Activated CD8-positive, alpha-beta T cell treated with anti-CD3 and anti-CD28 coated beads, Interleukin-2, amount 10 ng/mL, durations not matched to agents 7 days and 5 days (primary cell): ENCODE measurements at regions of chr10 and their contacts with region 1.

Region 1: GRCh38 chr10:84264611-84265141 is 19.8 kb downstream of the RGR start:
- DNase-seq: peak; percentile 82
- ATAC-seq: peak; percentile 97
- H3K4me3 Mint-ChIP-seq: no peak overlapping the region
- H3K27ac Mint-ChIP-seq: no peak overlapping the region
- H3K4me1 Mint-ChIP-seq: peaks cover 18% of the 10 kb centered on the region
- H3K27me3 Mint-ChIP-seq: peaks cover 18% of the 10 kb centered on the region

Region 2: DNA sequence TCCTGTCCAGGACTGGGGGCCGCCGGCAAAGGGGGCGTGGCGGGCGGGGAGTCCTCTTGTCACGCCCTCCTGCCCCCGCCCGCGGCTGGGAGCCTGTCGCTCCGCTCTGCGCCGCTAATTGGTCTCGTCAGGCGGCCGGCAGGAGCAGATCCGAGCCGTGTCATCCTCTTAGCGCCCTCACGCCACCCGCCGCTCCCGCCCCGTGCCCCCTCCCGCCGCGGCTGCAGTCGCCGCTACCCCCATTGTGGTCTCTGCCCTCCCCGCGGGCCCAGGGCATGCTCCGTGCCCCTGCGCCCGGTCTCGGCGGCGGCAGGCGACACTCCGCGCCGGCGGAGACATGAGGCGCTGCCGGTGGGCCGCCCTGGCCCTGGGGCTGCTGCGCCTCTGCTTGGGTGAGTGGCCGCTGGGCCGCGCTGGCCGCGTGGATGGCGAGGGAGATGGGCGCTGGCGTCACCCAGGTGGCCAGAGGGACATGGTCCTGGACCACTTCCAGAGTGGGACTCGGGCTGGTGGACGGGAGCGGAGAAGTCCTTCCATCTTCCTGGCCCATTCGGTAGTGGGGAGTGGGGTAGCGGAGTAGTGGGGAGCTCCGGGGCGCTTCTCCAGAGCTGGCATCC is 70.1 kb before region 1 on chr10 and contains the start of gene CDHR1:
- CTCF ChIA-PET with region 1: no interaction called
- POLR2A ChIA-PET with region 1: no interaction called
- DNase-seq: peak; percentile 65
- ATAC-seq: peak; percentile 84
- H3K4me3 Mint-ChIP-seq: peak within 1 kb of the TSS; percentile 50
- H3K27ac Mint-ChIP-seq: no peak within 1 kb of the TSS
- H3K4me1 Mint-ChIP-seq: peaks cover 23% of the 10 kb centered on the region
- H3K27me3 Mint-ChIP-seq: peaks cover 52% of the 10 kb centered on the region
- total RNA-seq, gene CDHR1: 0.26 to 0.29 TPM

Region 3: DNA sequence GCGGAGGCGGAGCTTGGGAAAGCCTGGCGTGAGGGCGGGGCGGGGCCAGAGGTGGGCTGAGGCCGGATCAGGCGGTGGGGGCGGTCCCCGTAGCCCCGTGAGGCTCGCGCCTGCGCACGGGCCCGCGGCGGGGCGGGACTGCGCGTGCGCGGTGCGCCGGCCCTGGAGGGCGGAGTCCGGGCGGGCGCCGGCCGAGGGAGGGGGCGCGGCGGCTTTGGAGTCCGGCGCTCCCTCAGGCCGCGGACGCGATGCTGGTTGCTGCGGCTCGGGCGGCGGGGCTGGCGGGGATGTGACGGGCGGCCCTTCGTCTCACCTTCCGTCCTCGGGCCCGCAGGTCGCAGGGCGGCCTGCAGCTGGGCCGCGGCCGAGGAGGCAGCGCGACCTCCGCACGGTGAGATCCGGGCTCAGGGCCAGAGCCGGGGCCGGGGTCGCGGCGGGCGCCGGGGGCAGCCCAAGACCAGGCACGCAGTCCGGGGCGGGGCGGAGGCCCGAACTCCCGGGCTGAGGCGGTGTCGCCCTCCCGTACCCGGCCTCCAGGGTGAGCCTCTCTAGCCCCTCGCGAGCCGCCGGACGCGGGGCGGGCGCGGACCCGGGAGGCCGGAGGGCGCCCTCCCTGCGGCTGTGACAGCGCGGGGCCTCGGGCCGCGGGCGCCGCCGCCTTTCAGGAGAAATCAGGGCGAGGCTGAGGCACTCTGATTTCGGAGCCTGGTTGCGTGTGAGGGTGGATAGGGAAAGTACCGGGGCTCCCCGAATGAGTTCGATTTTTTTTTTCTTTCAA is 63.9 kb after region 1 on chr10 and contains the start of gene CCSER2:
- CTCF ChIA-PET with region 1: interaction called, 28 read pairs
- POLR2A ChIA-PET with region 1: interaction called, 5 read pairs
- DNase-seq: peak; percentile 94
- ATAC-seq: peak; percentile 80
- H3K4me3 Mint-ChIP-seq: peak within 1 kb of the TSS; percentile 82
- H3K27ac Mint-ChIP-seq: peak within 1 kb of the TSS; percentile 92
- H3K4me1 Mint-ChIP-seq: peaks cover 34% of the 10 kb centered on the region
- H3K27me3 Mint-ChIP-seq: peaks cover 3% of the 10 kb centered on the region
- total RNA-seq, gene CCSER2: 77.8 to 78.8 TPM

Region 4: GRCh38 chr10:84341538-84341856 is 76.8 kb after region 1 on chr10:
- CTCF ChIA-PET with region 1: interaction called, 17 read pairs
- POLR2A ChIA-PET with region 1: no interaction called
- DNase-seq: no peak
- ATAC-seq: peak; percentile 20
- H3K4me3 Mint-ChIP-seq: no peak overlapping the region
- H3K27ac Mint-ChIP-seq: peak overlapping the region; percentile 9
- H3K4me1 Mint-ChIP-seq: peaks cover 58% of the 10 kb centered on the region
- H3K27me3 Mint-ChIP-seq: no peaks in the 10 kb centered on the region

Region 5: DNA sequence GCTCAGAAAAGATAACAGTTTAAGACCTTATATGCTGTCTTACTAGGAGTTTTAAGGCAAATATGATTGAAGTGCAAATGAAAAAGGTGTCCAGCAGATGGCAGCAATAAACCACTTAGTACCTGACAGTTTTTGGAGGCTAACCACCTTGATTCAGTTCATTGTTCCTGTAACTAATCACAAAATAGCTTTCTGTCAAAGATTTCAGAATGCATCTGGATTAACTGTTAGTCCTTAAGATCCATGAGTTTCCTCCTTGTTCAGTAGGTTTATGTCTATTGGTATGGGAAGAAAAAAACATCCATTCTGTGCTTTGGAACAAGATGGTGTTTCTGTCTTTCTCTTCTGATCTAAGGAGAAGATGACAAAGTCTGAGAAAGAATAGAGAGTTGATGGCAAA is 110.3 kb after region 1 on chr10:
- CTCF ChIA-PET with region 1: interaction called, 24 read pairs
- POLR2A ChIA-PET with region 1: no interaction called
- DNase-seq: peak; percentile 65
- ATAC-seq: no peak
- H3K4me3 Mint-ChIP-seq: no peak overlapping the region
- H3K27ac Mint-ChIP-seq: no peak overlapping the region
- H3K4me1 Mint-ChIP-seq: peaks cover 22% of the 10 kb centered on the region
- H3K27me3 Mint-ChIP-seq: no peaks in the 10 kb centered on the region

Region 6: DNA sequence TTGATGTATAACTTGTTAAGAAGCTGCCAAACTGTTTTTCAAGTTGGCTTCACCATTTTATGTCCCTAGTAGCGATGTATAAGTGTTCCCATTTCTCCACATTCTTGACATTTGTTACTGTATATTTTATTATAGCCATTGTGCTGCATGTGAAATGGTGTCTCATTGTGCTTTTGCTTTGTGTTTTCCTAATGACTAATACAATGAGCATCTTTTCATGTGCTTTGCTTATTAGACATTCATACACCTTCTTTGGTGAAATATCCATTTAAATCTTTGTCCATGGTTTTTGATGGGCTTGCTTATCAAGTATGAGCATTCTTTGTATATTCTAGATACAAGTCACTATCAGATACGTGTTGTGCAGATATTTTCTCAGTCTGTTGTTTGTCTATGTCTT is 266.7 kb after region 1 on chr10:
- CTCF ChIA-PET with region 1: interaction called, 260 read pairs
- POLR2A ChIA-PET with region 1: no interaction called
- DNase-seq: no peak
- ATAC-seq: no peak
- H3K4me3 Mint-ChIP-seq: no peak overlapping the region
- H3K27ac Mint-ChIP-seq: no peak overlapping the region
- H3K4me1 Mint-ChIP-seq: no peaks in the 10 kb centered on the region
- H3K27me3 Mint-ChIP-seq: no peaks in the 10 kb centered on the region